ENCODE measurements at regions of chr19 and their contacts with region 1.

Region 1: GRCh38 chr19:34999498-35000341 is at the start of gene GRAMD1A:
- DNase-seq: peak; percentile 63 to 82 (median 73)
- H3K4me3 ChIP-seq: peak within 1 kb of the TSS; percentile 50 to 85 (median 75)
- H3K27ac ChIP-seq: peak within 1 kb of the TSS; percentile 83 to 93
- H3K4me1 ChIP-seq: peaks cover 25 to 88% (median 79%) of the 10 kb centered on the region in 4 experiments
- H3K27me3 ChIP-seq: no peaks in the 10 kb centered on the region

Region 2: DNA sequence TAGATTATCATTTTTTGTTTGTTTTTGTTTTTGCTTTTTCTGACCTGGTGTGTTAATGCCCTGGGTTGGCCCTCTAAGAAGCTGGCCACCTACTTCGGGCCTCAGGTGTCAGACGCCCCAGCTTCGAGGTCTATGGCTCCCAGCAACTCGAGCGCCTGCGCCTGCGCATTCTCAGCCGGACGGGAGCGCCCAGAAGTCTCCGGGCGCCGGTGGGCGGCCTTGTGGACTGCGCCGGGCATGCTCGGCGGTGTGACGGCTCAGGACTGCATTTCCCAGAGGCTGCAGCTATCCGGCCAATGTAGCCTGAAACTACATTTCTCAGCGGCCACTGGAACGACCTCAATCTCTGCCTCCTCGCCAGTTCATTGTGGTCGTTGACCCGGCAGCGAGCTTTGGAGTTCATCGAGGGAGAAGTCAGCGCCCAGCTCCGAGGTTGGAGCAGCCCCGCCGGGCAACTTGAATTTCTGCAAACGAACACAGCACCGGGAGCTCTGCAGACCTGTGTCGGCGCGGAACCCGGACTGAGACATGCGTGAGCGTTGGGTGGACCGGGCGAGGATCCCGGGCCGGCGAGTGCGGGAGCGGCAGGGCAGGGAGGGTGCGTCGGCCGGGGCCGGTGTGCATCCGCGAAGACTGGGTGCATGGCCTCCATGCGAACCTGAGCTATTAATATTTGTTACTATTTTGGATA is 72.9 kb before region 1 on chr19 and contains the start of gene ZNF30:
- CTCF ChIA-PET with region 1: no interaction called
- POLR2A ChIA-PET with region 1: no interaction called
- DNase-seq: peak; percentile 82 to 88 (median 87)
- H3K4me3 ChIP-seq: peak within 1 kb of the TSS; percentile 73 to 88 (median 82)
- H3K27ac ChIP-seq: peak within 1 kb of the TSS in 1 of 2 experiments; percentile 64
- H3K4me1 ChIP-seq: peaks cover 4 to 11% (median 7%) of the 10 kb centered on the region in 4 experiments
- H3K27me3 ChIP-seq: no peaks in the 10 kb centered on the region

Region 3: DNA sequence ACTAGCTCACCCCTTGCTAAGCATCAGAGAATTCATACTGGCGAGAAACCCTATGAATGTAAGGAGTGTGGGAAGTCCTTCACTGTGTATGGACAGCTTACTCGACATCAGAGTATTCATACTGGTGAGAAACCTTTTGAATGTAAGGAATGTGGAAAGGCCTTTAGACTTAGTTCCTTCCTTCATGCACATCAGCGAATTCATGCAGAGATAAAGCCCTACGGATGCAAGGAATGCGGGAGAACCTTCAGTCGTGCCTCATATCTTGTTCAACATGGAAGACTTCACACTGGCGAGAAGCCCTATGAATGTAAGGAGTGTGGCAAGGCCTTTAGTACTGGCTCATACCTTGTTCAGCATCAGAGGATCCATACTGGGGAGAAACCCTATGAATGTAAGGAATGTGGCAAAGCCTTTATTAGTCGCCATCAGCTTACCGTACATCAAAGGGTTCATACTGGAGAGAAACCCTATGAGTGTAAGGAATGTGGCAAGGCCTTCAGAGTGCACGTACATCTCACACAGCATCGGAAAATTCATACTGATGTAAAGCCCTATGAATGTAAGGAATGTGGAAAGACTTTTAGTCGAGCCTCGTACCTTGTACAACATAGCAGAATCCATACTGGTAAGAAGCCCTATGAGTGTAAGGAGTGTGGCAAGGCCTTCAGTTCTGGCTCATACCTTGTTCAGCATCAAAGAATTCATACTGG is 55.7 kb before region 1 on chr19:
- CTCF ChIA-PET with region 1: no interaction called
- POLR2A ChIA-PET with region 1: no interaction called
- DNase-seq: no peak
- H3K4me3 ChIP-seq: no peak overlapping the region
- H3K27ac ChIP-seq: no peak overlapping the region
- H3K4me1 ChIP-seq: no peaks in the 10 kb centered on the region
- H3K27me3 ChIP-seq: no peaks in the 10 kb centered on the region

Region 4: DNA sequence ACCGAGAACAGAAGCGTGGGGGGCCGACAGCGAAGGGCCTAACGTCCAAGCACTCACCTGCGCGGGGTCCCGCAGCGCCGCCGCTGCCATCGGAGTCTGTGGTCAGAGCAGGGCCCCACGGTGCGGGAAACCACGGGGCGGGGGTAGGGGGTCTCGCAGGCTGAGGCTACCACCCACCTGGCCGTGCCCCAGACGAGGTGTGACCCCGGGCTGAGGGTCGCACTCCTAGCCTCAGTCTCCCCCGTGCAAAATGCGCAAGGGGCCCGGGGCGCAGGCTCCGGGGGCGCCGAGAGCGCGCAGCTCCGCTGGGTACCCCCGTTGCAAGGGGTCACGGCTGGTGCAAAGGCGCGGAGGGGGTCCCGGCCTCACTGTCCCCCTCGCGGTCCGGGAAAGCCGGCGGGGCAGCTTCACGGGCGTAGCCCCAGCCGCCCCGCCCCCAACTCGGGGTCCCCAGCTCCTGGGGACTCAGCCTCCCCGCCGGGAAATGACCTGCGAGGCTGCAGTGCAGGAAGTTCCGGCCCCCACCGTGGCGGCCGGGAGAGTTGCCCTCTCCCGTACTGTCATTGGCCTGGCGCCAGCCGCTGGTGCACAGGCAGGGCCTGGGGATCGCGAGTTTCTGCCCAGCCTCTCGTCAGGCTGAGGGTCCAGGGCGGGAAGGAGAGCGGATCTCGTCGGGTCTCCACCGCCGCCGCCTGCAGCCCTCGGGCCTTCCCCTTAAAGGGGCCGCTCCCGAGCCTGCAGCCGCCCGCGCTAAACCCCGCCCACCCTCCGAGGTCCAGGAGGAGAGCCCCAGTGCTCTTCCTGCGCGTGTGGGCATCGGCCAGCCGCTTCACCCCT is 35.9 kb before region 1 on chr19 and contains the start of gene ZNF792:
- CTCF ChIA-PET with region 1: interaction called, 249 read pairs
- POLR2A ChIA-PET with region 1: interaction called, 13 read pairs
- DNase-seq: peak; percentile 30 to 67 (median 54)
- H3K4me3 ChIP-seq: peak within 1 kb of the TSS; percentile 83 to 94 (median 89)
- H3K27ac ChIP-seq: peak within 1 kb of the TSS; percentile 76 to 86
- H3K4me1 ChIP-seq: peaks cover 4 to 22% (median 18%) of the 10 kb centered on the region in 4 experiments
- H3K27me3 ChIP-seq: no peaks in the 10 kb centered on the region

Region 5: DNA sequence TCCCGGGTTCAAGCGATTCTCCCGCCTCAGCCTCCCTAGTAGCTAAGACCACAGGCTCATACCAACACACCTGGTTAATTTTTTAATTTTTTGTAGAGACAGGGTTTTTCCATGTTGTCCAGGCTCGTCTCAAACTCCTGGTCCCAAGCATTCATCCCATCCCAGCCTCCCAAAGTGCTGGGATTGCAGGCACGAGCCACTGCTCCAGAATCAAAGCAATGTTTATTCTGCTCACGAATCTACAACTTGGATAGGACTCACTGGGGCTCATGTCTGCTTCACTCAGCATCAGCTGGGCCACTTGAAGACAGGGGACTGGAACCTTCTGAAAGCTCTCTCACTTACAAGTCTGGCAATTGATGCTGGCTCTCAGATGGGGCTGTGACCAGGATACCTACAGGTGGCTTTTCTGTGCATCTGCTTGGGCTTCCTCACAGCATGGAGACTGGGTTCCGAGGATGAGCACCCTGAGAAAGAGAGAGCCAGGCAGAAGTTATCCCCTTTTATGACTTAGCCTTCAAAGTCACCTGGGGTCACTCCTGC is 27.5 kb before region 1 on chr19:
- CTCF ChIA-PET with region 1: interaction called, 249 read pairs
- POLR2A ChIA-PET with region 1: interaction called, 3 read pairs
- DNase-seq: no peak
- H3K4me3 ChIP-seq: no peak overlapping the region
- H3K27ac ChIP-seq: no peak overlapping the region
- H3K4me1 ChIP-seq: peaks cover 0 to 9% (median 3%) of the 10 kb centered on the region in 4 experiments
- H3K27me3 ChIP-seq: no peaks in the 10 kb centered on the region

Region 6: DNA sequence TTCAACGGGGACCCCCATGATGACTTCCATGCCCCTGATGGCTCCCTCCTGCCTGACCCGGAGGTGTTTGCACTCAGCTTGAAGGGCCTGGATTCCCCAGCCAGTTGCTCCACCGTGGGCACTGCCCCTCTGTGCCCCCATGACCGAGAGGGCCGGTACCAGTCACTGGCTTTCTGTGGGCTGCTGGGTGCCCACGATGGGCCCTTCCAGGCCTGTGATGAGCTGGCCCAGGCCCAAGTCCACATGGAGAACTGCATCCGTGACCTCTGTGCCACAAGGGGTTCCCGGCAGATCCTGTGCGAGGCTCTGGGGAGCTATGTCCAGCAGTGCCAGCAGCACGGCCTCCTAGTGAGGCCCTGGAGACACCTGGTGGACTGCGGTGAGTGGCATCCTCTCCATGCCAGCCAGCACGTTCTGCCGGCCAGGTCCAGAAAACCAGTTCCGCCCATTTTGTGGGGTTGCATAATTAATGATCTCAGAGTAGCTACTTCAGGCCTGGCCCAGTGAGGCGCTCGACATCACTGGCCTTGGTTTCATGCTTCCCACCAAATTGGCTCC is 81.0 kb after region 1 on chr19:
- CTCF ChIA-PET with region 1: no interaction called
- POLR2A ChIA-PET with region 1: no interaction called
- DNase-seq: no peak
- H3K4me3 ChIP-seq: no peak overlapping the region
- H3K27ac ChIP-seq: no peak overlapping the region
- H3K4me1 ChIP-seq: peaks cover 0 to 11% (median 2%) of the 10 kb centered on the region in 4 experiments
- H3K27me3 ChIP-seq: no peaks in the 10 kb centered on the region

Region 7: DNA sequence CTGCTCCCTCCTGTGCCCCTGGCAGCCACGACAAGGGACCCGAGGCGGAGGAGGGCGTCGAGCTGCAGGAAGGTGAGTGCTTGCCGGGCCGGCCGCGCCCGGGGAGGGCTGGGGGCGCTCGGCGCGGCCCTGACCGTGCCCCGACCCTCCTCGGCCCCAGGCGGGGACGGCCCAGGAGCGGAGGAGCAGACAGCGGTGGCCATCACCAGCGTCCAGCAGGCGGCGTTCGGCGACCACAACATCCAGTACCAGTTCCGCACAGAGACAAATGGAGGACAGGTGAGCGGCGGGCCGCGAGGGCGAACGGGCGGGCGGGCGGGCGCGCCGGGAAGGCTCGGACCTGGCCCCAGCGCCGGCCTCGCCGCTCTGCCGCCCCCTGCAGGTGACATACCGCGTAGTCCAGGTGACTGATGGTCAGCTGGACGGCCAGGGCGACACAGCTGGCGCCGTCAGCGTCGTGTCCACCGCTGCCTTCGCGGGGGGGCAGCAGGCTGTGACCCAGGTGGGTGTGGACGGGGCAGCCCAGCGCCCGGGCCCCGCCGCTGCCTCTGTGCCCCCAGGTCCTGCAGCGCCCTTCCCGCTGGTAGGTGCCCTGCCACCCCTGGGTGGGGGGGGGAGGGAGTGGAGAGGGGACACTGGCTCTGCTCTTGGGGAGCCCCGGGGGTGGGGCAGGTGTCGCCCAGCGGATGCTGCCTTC is 269.8 kb after region 1 on chr19:
- CTCF ChIA-PET with region 1: no interaction called
- POLR2A ChIA-PET with region 1: no interaction called
- DNase-seq: peak; percentile 83 to 90 (median 87)
- H3K4me3 ChIP-seq: peak overlapping the region; percentile 56 to 88 (median 74)
- H3K27ac ChIP-seq: peak overlapping the region; percentile 33 to 49
- H3K4me1 ChIP-seq: peaks cover 10 to 68% (median 55%) of the 10 kb centered on the region in 4 experiments
- H3K27me3 ChIP-seq: no peaks in the 10 kb centered on the region